Dorsolateral prefrontal cortex (tissue), 120 donors: ENCODE measurements at regions of chr2 and their contacts with region 1.

Region 1: GRCh38 chr2:8681786-8682692 is at the start of gene ID2:
- DNase-seq: peak; percentile 98 to 99 (median 99)
- H3K4me3 ChIP-seq: peak within 1 kb of the TSS; percentile 63 to 93 (median 79)
- H3K27ac ChIP-seq: peak within 1 kb of the TSS; percentile 55 to 99 (median 95)
- H3K27me3 ChIP-seq: peaks cover 0 to 12% (median 0%) of the 10 kb centered on the region in 45 donors
- CTCF ChIP-seq: peak in 20 of 56 donors; percentile 6 to 42 (median 28)
- total RNA-seq, gene ID2: 73.4 to 233 (median 124) TPM

Region 2: GRCh38 chr2:7097348-7097895 is 1584.6 kb before region 1 on chr2:
- intact Hi-C with region 1: loop called in 1 of 2 experiments (anchors 5 kb)
- DNase-seq: peak; percentile 68 to 86 (median 70)
- H3K4me3 ChIP-seq: peak overlapping the region in 51 of 59 donors; percentile 0 to 58 (median 38)
- H3K27ac ChIP-seq: peak overlapping the region in 1 of 59 donors; percentile 46
- H3K27me3 ChIP-seq: no peaks in the 10 kb centered on the region
- CTCF ChIP-seq: peak; percentile 85 to 100 (median 98)

Region 3: GRCh38 chr2:7203055-7203467 is 1479.0 kb before region 1 on chr2:
- intact Hi-C with region 1: loop called in 1 of 2 experiments (anchors 5 kb)
- DNase-seq: peak in 7 of 10 donors; percentile 49 to 79 (median 61)
- H3K4me3 ChIP-seq: no peak overlapping the region
- H3K27ac ChIP-seq: peak overlapping the region in 9 of 59 donors; percentile 6 to 53 (median 31)
- H3K27me3 ChIP-seq: no peaks in the 10 kb centered on the region
- CTCF ChIP-seq: peak; percentile 75 to 99 (median 90)

Region 4: GRCh38 chr2:8259106-8259840 is 422.8 kb before region 1 on chr2:
- intact Hi-C with region 1: loop called (anchors 2 to 5 kb)
- DNase-seq: peak in 2 of 10 donors; percentile 41 to 50
- H3K4me3 ChIP-seq: peak overlapping the region in 4 of 59 donors; percentile 3 to 34 (median 14)
- H3K27ac ChIP-seq: peak overlapping the region; percentile 20 to 96 (median 86)
- H3K27me3 ChIP-seq: peaks cover 0 to 3% (median 0%) of the 10 kb centered on the region in 45 donors
- CTCF ChIP-seq: peak in 6 of 56 donors; percentile 3 to 23 (median 17)

Region 5: DNA sequence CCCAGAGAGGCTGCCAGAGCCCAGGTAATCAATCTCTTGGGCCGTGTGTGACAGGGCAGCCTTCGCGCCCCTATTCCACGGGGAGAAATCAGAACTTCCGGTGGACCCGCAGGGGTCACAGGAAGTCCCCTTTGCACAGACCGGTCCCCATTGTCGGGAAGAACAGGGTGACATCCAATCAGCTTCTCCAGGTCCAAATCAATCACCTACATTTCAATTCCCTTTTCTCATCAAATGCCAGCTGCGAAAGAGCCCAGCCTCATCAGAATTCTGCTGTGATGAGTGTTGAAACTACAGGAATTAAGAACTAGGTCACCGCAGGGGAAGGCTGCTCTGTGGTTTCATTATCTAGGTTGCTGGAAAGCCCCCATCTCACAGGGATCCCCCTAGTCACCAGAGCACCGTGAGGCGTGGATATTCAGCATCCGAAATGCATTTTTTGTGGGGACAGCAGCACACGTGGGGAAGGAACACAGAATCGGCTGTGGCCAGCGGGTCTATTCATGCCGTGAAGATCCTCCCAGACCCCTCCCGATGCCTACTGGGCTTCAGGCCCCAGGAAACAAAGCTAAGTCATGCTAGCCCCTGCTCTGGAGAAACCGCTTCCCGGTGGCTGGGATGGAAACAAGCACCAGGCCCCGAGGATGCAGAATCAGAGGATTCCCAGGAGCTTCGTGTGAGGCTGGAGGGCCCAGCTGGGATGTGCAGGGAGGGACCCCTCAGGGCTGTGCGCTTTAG is 193.9 kb before region 1 on chr2:
- intact Hi-C with region 1: no loop called
- DNase-seq: peak in 3 of 10 donors; percentile 31 to 45 (median 42)
- H3K4me3 ChIP-seq: peak overlapping the region in 49 of 59 donors; percentile 2 to 52 (median 27)
- H3K27ac ChIP-seq: peak overlapping the region in 47 of 59 donors; percentile 7 to 87 (median 64)
- H3K27me3 ChIP-seq: peaks cover 0 to 6% (median 0%) of the 10 kb centered on the region in 45 donors
- CTCF ChIP-seq: no peak

Region 6: DNA sequence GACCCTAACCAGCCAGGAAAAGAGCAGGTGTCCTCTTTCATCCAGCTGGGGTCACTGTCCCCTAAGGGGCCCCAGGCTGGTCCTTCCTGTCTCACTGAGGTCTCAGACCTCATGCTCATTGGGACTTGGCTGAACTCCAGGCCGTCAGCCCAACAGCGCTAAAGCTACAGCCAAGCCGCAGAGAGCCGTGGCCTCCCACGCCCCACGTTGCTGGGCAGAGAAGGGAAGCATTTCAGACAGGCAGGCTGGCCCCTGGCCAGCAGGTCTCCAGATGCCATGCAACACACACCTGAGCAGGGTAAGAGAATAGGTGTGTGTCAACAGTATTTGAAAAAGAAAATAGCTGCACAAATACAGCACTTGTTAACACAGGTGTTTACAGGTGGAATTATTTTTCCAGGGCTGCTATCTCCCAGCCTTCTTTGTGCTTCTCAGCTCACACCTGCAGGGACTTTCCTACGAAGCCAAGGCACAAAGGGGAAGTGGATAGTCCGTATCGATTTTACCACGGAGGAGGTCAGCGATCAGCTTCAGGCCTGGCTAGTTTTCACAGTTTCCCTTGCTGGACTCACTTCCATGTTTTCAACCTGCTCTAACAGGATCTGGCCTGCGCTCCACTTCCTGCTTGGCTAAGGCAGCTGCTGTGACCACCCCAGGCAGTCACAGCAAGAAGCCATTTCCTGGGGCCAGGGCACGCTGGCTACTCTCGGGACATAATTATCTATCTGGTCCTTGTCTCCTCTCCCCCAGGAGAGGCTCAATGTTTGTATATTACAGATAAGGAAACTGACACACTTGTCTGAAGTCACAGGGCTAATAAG is 156.2 kb before region 1 on chr2:
- intact Hi-C with region 1: loop called (anchors 10 kb)
- DNase-seq: peak in 8 of 10 donors; percentile 57 to 82 (median 68)
- H3K4me3 ChIP-seq: no peak overlapping the region
- H3K27ac ChIP-seq: peak overlapping the region in 3 of 59 donors; percentile 0 to 16 (median 5)
- H3K27me3 ChIP-seq: peaks cover 0 to 4% (median 0%) of the 10 kb centered on the region in 45 donors
- CTCF ChIP-seq: peak in 35 of 56 donors; percentile 10 to 50 (median 29)

Region 7: DNA sequence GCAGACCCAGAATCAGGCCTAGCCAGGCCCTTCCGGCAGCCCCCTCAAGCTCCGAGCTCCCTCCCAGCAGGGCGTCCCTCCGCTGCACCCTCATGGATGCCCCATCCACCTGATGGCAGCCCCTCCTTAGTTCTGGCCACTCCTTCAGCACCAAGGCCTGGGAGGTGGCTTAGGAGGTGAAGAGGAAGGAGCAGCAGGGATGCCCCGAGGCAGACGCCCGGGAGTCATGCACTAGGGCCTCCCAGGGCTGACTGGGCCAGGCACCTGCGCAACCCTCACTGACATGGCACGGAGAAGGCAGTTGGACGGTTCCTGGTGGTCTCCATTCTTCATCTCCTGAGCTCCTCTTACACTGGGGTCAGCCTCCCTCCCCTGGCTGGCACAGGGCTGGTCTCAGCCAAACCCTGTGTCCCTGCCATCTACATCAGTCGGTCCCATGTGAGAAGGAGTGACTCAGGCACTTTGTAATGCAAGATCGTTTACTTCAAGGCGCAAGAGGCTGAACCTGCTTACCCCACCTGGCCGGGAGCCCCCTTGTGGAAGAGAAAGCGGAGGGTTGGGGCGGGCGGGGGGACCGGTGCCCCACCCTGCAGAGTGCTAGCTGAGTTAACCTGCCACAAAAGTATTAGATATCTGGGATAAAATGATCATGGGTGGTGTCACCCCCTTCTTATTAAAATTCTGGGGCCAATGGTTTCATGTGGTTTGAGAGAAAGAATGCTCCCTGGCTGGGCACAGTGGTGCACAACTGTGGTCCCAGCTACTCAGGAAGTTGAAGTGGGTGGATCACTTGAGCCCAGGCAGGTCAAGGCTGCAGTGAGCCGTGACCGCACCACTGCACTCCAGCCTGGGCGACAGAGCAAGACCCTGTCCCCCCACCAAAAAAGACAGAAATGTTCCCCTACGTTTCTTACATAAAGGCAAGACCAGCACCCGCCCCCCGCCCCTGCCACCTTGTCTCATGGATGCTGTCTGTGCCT is 53.5 kb before region 1 on chr2:
- intact Hi-C with region 1: loop called in 1 of 2 experiments (anchors 1 kb)
- DNase-seq: peak in 1 of 10 donors; percentile 26
- H3K4me3 ChIP-seq: no peak overlapping the region
- H3K27ac ChIP-seq: no peak overlapping the region
- H3K27me3 ChIP-seq: no peaks in the 10 kb centered on the region
- CTCF ChIP-seq: no peak